ENCODE measurements at regions of chr3 and their contacts with region 1.

Region 1: DNA sequence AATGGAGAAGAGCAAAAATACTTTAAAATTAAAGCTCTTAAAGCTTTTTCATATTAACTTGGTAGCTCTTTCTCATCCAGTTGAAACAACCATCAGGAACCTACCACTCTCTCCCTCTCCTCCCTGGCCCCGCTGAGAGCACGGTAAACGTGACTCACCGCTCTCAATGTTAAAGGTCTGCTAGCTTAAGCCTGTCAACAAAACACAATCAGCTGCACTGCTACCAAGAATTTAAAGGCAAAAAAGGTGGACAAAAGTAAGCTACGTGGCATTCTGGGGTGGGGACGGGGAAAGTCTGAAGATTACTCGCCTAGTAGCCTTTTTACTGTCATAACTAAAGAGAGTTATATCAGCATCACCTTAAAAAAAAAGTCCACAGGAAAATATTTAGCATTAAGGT is 8.4 kb upstream of the GP5 start:
- DNase-seq: no peak
- ATAC-seq: no peak

Region 2: DNA sequence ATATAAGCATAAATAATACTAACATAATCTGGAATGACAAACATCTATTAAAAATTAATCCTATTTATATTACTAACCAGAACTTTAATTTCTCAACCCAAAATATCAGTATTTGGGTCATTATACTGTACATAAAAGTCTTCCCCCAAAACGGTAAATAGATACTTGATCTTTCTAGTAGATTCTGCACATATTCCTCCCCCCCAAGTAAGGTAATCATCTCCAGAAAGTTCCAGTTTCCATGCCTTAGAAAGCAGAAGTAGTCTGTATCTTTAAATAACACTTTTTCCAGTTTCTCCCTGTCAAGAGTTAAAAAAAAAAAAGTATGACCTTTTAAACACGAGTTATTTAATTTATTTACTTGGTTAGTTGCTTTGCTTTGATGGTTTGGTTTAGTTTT is 1339.1 kb before region 1 on chr3:
- intact Hi-C with region 1: no loop called
- DNase-seq: no peak
- ATAC-seq: no peak

Region 3: GRCh38 chr3:194333212-194333980 is 74.0 kb before region 1 on chr3:
- intact Hi-C with region 1: loop called (anchors 5 kb)
- DNase-seq: peak; percentile 92
- ATAC-seq: peak; percentile 90

Region 4: DNA sequence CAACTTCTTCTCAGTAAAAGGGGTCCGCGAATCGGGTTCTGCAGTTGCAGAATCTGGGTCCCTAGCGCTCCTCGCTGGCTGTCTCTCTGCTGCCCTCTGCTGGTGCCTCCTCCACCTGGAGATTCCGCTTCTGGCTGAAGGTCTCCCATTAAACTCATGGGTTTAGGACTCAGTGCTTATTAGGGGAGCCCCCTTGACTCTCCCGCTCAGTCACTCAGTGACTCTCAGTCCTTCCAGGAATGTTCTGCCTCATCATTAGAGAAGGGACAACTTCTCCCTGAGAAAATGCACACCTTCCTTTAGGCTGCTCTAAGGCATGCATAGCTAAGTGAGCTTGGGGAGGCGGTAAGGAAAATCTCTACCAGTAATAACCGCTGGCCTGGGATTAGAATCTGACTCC is 63.4 kb before region 1 on chr3:
- intact Hi-C with region 1: no loop called
- DNase-seq: peak; percentile 85
- ATAC-seq: peak; percentile 71

Region 5: GRCh38 chr3:194640829-194641228 is 233.4 kb after region 1 on chr3:
- intact Hi-C with region 1: no loop called
- DNase-seq: no peak
- ATAC-seq: no peak